ENCODE measurements at regions of chr7 and their contacts with region 1.

Region 1: GRCh38 chr7:105156731-105157130 is 142.7 kb downstream of the KMT2E start:
- DNase-seq: no peak
- ATAC-seq: no peak
- H3K4me3 ChIP-seq: no peak overlapping the region
- H3K4me3 Mint-ChIP-seq: no peak overlapping the region
- H3K27ac ChIP-seq: no peak overlapping the region
- H3K27ac Mint-ChIP-seq: peak overlapping the region in 2 of 9 donors; percentile 14
- H3K4me1 ChIP-seq: no peaks in the 10 kb centered on the region
- H3K4me1 Mint-ChIP-seq: peaks cover 2 to 9% (median 4%) of the 10 kb centered on the region in 7 donors
- H3K27me3 ChIP-seq: no peaks in the 10 kb centered on the region
- H3K27me3 Mint-ChIP-seq: no peaks in the 10 kb centered on the region

Region 2: GRCh38 chr7:105003275-105003674 is 153.5 kb before region 1 on chr7:
- CTCF ChIA-PET with region 1: no interaction called
- POLR2A ChIA-PET with region 1: no interaction called
- intact Hi-C with region 1: no loop called
- DNase-seq: peak in 1 of 9 donors; percentile 50
- ATAC-seq: peak; percentile 52
- H3K4me3 ChIP-seq: peak overlapping the region; percentile 27
- H3K4me3 Mint-ChIP-seq: peak overlapping the region; percentile 61 to 80 (median 65)
- H3K27ac ChIP-seq: peak overlapping the region; percentile 57
- H3K27ac Mint-ChIP-seq: peak overlapping the region; percentile 47 to 92 (median 78)
- H3K4me1 ChIP-seq: peaks cover 66 to 76% of the 10 kb centered on the region in 2 donors
- H3K4me1 Mint-ChIP-seq: peaks cover 66 to 96% (median 90%) of the 10 kb centered on the region in 7 donors
- H3K27me3 ChIP-seq: no peaks in the 10 kb centered on the region
- H3K27me3 Mint-ChIP-seq: no peaks in the 10 kb centered on the region

Region 3: DNA sequence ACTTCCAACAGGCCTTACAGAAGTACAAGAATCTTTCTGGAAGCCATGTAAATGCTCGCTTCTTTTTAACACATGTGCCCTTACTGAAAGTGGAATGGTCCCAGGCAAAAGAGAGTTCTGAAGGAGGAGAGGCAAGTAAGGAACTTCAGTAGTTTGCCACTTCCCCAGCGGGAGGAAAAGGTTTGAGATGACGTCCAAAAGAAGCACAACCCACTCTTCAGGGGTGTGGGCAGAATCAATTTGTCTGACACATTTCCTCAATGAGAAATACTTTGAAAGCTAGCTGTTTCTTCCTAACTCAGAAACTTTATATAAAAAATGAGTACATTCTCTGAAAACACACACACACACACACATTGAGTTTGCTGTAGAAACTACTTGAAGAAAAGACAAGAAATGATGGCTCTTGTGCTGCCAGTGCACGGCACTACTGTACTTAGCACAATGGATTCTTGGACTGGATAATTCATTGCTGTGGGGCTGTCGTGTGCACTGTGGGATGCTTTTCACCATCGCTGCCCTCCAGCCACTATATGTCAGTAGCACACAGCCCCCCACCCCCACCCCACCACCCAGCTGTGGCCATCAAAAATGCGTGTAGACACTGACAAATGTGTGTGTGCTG is 49.0 kb after region 1 on chr7:
- CTCF ChIA-PET with region 1: no interaction called
- POLR2A ChIA-PET with region 1: no interaction called
- intact Hi-C with region 1: loop called in 1 of 2 experiments (anchors 2 kb)
- DNase-seq: peak in 8 of 9 donors; percentile 28 to 66 (median 58)
- ATAC-seq: peak; percentile 77
- H3K4me3 ChIP-seq: no peak overlapping the region
- H3K4me3 Mint-ChIP-seq: peak overlapping the region; percentile 6 to 60 (median 40)
- H3K27ac ChIP-seq: no peak overlapping the region
- H3K27ac Mint-ChIP-seq: peak overlapping the region in 8 of 9 donors; percentile 35 to 92 (median 75)
- H3K4me1 ChIP-seq: peaks cover 0 to 29% of the 10 kb centered on the region in 2 donors
- H3K4me1 Mint-ChIP-seq: peaks cover 34 to 75% (median 60%) of the 10 kb centered on the region in 7 donors
- H3K27me3 ChIP-seq: no peaks in the 10 kb centered on the region
- H3K27me3 Mint-ChIP-seq: no peaks in the 10 kb centered on the region

Region 4: GRCh38 chr7:105589356-105590077 is 432.8 kb after region 1 on chr7:
- CTCF ChIA-PET with region 1: interaction called, 3 read pairs
- POLR2A ChIA-PET with region 1: no interaction called
- intact Hi-C with region 1: loop called in 1 of 2 experiments (anchors 1 kb)
- DNase-seq: peak in 8 of 9 donors; percentile 16 to 61 (median 42)
- ATAC-seq: peak; percentile 87
- H3K4me3 ChIP-seq: no peak overlapping the region
- H3K4me3 Mint-ChIP-seq: no peak overlapping the region
- H3K27ac ChIP-seq: no peak overlapping the region
- H3K27ac Mint-ChIP-seq: peak overlapping the region in 3 of 9 donors; percentile 4 to 70 (median 69)
- H3K4me1 ChIP-seq: no peaks in the 10 kb centered on the region
- H3K4me1 Mint-ChIP-seq: peaks cover 0 to 17% (median 4%) of the 10 kb centered on the region in 7 donors
- H3K27me3 ChIP-seq: no peaks in the 10 kb centered on the region
- H3K27me3 Mint-ChIP-seq: peaks cover 0 to 9% (median 0%) of the 10 kb centered on the region in 5 donors